ENCODE measurements at regions of chr6 and their contacts with region 1.

Region 1: DNA sequence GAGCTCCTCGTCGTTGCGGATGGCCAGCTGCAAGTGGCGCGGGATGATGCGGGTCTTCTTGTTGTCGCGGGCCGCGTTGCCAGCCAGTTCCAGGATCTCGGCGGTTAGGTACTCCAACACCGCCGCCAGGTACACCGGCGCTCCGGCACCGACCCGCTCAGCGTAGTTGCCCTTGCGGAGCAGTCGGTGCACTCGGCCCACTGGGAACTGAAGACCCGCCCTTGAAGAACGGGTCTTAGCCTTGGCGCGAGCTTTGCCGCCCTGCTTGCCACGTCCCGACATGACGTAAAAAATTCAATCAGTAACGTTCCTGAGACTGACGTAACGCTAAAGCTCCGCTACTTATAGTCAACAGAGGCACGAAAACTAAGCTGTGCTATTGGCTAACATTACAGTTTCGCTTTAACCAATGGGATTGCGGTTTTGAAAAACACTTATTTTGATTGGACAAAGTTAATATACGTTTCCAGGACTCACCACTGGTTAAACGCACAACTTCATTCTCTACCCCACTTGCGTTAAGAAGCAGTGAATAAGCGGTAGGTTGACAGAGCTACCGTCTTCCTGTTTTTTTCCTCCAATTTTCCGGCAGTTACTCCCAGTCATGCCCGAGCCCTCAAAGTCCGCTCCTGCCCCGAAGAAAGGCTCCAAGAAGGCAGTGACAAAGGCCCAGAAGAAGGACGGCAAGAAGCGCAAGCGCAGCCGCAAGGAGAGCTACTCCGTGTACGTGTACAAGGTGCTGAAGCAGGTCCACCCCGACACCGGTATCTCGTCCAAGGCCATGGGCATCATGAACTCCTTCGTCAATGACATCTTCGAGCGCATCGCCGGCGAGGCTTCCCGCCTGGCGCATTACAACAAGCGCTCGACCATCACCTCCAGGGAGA is 73.9 kb downstream of the OR2B2 start:
- DNase-seq: peak; percentile 87 to 98
- H3K4me3 ChIP-seq: peak overlapping the region; percentile 82
- H3K4me1 ChIP-seq: peaks cover 19% of the 10 kb centered on the region
- H3K27me3 ChIP-seq: no peaks in the 10 kb centered on the region

Region 2: GRCh38 chr6:26204332-26205165 is 1633.8 kb before region 1 on chr6:
- in situ Hi-C with region 1: loop called (anchors 10 kb)
- DNase-seq: peak; percentile 95
- H3K4me3 ChIP-seq: peak overlapping the region; percentile 81
- H3K4me1 ChIP-seq: peaks cover 31% of the 10 kb centered on the region
- H3K27me3 ChIP-seq: no peaks in the 10 kb centered on the region

Region 3: DNA sequence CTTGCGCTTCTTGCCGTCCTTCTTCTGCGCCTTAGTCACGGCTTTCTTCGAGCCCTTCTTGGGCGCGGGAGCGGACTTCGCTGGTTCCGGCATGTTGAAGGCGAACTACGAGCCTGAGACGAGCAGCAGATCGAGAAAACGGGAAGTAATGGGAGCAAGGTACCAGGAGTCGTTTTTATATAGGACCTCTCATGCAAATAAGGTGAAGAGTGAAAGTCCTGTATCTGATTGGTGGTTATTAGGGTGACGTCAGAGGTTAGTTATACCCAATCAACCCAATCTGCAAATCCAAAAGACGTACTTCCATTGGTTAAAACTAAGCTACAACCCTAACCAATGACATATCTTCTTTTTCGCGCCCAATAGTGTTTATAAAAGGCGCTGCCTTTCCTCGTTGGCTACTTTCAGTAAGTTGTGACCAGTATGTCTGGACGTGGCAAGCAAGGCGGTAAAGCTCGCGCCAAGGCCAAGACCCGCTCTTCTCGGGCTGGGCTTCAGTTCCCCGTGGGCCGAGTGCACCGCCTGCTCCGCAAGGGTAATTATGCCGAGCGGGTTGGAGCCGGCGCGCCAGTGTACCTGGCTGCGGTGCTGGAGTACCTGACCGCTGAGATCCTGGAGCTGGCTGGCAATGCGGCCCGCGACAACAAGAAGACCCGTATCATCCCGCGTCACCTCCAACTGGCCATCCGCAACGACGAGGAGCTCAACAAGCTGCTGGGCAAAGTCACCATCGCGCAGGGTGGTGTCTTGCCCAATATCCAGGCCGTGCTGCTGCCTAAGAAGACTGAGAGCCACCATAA is 691.4 kb before region 1 on chr6:
- in situ Hi-C with region 1: loop called (anchors 5 kb)
- DNase-seq: peak; percentile 90 to 98
- H3K4me3 ChIP-seq: peak overlapping the region; percentile 51
- H3K4me1 ChIP-seq: peaks cover 6% of the 10 kb centered on the region
- H3K27me3 ChIP-seq: no peaks in the 10 kb centered on the region

Region 4: DNA sequence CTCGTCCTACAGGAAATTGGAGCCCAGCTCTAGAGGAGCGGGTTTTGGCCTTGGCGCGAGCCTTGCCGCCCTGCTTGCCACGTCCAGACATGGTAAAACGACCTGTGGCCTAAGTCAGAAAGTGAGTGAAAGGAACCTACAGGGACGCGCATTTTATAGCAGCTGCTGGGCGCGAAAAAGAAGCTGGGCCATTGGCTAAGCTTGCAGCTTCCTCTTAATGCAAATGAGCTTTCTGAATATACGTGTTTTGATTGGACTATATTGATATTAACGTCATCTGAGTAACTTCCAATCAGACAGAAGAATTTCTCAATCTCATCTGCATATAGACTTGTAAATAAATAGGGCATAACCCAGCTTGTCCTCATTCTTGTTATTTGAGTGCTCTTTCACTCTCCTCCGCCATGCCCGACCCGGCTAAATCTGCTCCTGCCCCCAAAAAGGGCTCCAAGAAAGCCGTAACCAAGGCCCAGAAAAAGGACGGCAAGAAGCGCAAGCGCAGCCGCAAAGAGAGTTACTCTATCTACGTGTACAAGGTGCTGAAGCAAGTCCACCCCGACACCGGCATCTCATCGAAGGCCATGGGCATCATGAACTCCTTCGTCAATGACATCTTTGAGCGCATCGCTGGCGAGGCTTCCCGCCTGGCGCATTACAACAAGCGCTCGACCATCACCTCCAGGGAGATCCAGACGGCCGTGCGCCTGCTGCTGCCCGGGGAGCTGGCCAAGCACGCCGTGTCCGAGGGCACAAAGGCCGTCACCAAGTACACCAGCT is 54.9 kb after region 1 on chr6:
- in situ Hi-C with region 1: loop called (anchors 5 kb)
- DNase-seq: peak; percentile 92 to 97
- H3K4me3 ChIP-seq: peak overlapping the region; percentile 63
- H3K4me1 ChIP-seq: peaks cover 33% of the 10 kb centered on the region
- H3K27me3 ChIP-seq: no peaks in the 10 kb centered on the region

Region 5: DNA sequence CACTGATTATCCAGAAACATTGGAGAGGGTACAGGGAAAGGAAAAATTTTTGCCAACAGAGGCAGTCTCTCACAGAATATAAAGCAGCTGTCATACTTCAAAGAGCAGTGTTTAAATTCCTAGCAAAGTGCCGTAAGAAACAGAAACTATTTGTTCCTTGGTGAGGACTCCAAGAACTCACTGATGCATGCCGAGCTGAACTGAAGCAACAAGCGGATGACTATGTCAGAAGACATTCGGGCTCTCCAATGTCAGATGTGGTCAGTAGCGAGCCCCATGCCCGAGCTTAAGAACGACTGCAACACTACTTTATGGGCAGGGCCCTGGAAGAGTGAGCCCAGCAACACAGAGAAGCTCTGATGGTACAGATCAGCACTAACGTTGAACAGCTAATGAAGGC is 173.4 kb after region 1 on chr6:
- in situ Hi-C with region 1: no loop called
- DNase-seq: no peak
- H3K4me3 ChIP-seq: no peak overlapping the region
- H3K4me1 ChIP-seq: no peaks in the 10 kb centered on the region
- H3K27me3 ChIP-seq: no peaks in the 10 kb centered on the region

Region 6: GRCh38 chr6:28141500-28142329 is 303.4 kb after region 1 on chr6 and contains the start of gene ZKSCAN8:
- in situ Hi-C with region 1: no loop called
- DNase-seq: peak; percentile 93 to 96
- H3K4me3 ChIP-seq: peak within 1 kb of the TSS; percentile 83
- H3K4me1 ChIP-seq: peaks cover 12% of the 10 kb centered on the region
- H3K27me3 ChIP-seq: no peaks in the 10 kb centered on the region